Mammary epithelial cell (primary cell): ENCODE measurements at regions of chr10 and their contacts with region 1.

Region 1: DNA sequence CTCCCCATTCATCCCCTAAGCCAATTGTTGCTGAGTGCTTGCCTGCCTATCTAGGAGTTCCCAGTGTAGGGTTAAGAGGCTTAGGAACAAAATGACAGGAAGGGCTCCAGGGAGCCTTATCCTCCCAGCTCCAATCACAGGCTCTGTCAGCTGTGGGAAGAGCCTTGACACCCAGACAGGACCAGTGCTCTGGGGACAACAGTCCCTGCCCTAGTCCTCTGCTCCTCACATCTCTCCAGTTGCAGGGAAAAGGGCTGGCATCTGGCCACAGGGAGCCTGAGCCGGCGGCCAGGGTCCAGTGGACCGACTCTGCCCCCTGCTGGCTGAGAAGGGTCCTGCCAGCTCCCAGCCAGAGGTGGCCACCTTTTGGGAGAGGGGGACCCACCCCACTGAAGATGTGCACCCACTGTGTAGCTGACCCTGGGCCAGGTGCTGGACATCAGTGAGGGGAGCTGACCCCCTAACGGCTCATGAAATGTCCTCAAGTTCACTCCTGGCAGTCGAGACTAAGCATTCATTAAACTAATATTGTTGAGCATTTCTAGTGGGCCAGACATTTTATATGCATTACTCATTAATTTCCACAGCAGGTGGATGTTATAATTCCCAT is 17.6 kb downstream of the DNAJB12 start:
- DNase-seq: peak; percentile 69
- H3K4me3 ChIP-seq: no peak overlapping the region
- H3K27ac ChIP-seq: peak overlapping the region; percentile 88
- H3K4me1 ChIP-seq: peaks cover 59% of the 10 kb centered on the region
- H3K27me3 ChIP-seq: no peaks in the 10 kb centered on the region
- CTCF ChIP-seq: peak; percentile 88 to 99

Region 2: DNA sequence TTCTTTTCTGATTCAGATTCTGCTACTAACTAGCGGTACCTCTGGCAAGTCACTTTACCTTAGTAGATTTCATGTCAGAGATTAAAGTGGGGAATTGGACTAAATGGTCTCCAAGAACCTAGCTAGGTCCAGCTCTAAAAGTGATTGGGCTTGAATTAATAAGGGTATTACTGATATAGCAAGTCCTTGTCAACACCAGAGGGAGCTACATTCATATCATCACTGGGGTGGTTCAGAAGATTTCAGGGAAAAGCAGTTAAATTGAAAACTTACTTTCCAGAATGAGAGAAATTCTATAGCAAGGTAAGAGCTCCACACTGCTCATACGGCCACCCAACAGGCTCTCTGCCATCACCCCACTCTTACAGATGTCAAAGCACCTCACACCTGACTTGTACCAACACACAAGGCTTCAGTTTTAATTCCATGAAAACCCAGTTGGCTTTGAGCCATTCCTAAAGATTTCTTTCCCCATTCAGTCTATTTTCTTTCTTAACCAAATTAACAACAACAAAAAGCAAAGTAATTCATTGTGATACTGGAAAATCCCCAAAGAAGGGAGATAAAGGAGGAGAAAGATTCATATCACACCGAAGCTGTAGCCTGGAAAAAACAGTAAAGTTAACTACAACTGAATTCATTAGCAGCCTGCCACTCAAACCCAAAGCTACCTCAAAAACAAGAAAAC is 210.8 kb before region 1 on chr10:
- CTCF ChIA-PET with region 1: interaction called, 3 read pairs
- dilution Hi-C with region 1: loop called (anchors 25 kb)
- in situ Hi-C with region 1: loop called (anchors 25 kb)
- intact Hi-C with region 1: loop called (anchors 1 kb)
- DNase-seq: peak; percentile 25
- H3K4me3 ChIP-seq: no peak overlapping the region
- H3K27ac ChIP-seq: no peak overlapping the region
- H3K4me1 ChIP-seq: no peaks in the 10 kb centered on the region
- H3K27me3 ChIP-seq: no peaks in the 10 kb centered on the region
- CTCF ChIP-seq: peak; percentile 36 to 51

Region 3: DNA sequence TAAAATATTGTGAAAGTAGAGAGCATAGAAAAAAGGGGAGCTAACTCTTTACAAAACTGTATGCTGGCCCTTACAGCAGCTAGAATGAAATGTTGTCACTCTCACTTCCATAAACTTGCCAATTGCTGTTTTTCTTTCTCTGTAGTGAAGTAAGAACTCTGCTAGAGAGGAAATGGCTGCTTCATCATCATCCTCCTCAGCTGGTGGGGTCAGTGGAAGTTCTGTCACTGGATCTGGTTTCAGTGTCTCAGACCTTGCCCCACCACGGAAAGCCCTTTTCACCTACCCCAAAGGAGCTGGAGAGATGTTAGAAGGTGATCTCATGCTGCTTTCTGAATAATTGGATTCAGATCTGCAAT is 113.4 kb before region 1 on chr10:
- CTCF ChIA-PET with region 1: no interaction called
- dilution Hi-C with region 1: no loop called
- in situ Hi-C with region 1: no loop called
- intact Hi-C with region 1: loop called (anchors 1 kb)
- DNase-seq: no peak
- H3K4me3 ChIP-seq: no peak overlapping the region
- H3K27ac ChIP-seq: no peak overlapping the region
- H3K4me1 ChIP-seq: peaks cover 5% of the 10 kb centered on the region
- H3K27me3 ChIP-seq: no peaks in the 10 kb centered on the region
- CTCF ChIP-seq: no peak

Region 4: GRCh38 chr10:72229261-72230251 is 107.6 kb before region 1 on chr10:
- CTCF ChIA-PET with region 1: no interaction called
- dilution Hi-C with region 1: loop called (anchors 10 kb)
- in situ Hi-C with region 1: no loop called
- intact Hi-C with region 1: no loop called
- DNase-seq: no peak
- H3K4me3 ChIP-seq: no peak overlapping the region
- H3K27ac ChIP-seq: no peak overlapping the region
- H3K4me1 ChIP-seq: no peaks in the 10 kb centered on the region
- H3K27me3 ChIP-seq: no peaks in the 10 kb centered on the region
- CTCF ChIP-seq: no peak

Region 5: GRCh38 chr10:72248468-72249151 is 88.5 kb before region 1 on chr10:
- CTCF ChIA-PET with region 1: interaction called, 15 read pairs
- dilution Hi-C with region 1: no loop called
- in situ Hi-C with region 1: no loop called
- intact Hi-C with region 1: no loop called
- DNase-seq: peak; percentile 92
- H3K4me3 ChIP-seq: no peak overlapping the region
- H3K27ac ChIP-seq: peak overlapping the region; percentile 93
- H3K4me1 ChIP-seq: peaks cover 62% of the 10 kb centered on the region
- H3K27me3 ChIP-seq: no peaks in the 10 kb centered on the region
- CTCF ChIP-seq: no peak

Region 6: GRCh38 chr10:72379062-72379461 is 41.9 kb after region 1 on chr10:
- CTCF ChIA-PET with region 1: no interaction called
- dilution Hi-C with region 1: no loop called
- in situ Hi-C with region 1: no loop called
- intact Hi-C with region 1: no loop called
- DNase-seq: no peak
- H3K4me3 ChIP-seq: no peak overlapping the region
- H3K27ac ChIP-seq: no peak overlapping the region
- H3K4me1 ChIP-seq: no peaks in the 10 kb centered on the region
- H3K27me3 ChIP-seq: no peaks in the 10 kb centered on the region
- CTCF ChIP-seq: no peak